Left colon (tissue), 2 donors: ENCODE measurements at regions of chr10 and their contacts with region 1.

Region 1: GRCh38 chr10:59625721-59626522 is 83.7 kb downstream of the SLC16A9 start:
- DNase-seq: no peak
- ATAC-seq: peak; percentile 76

Region 2: GRCh38 chr10:58952747-58953466 is 673.0 kb before region 1 on chr10:
- intact Hi-C with region 1: loop called in 1 of 2 experiments (anchors 5 kb)
- DNase-seq: peak in 1 of 2 donors; percentile 46
- ATAC-seq: peak; percentile 69

Region 3: DNA sequence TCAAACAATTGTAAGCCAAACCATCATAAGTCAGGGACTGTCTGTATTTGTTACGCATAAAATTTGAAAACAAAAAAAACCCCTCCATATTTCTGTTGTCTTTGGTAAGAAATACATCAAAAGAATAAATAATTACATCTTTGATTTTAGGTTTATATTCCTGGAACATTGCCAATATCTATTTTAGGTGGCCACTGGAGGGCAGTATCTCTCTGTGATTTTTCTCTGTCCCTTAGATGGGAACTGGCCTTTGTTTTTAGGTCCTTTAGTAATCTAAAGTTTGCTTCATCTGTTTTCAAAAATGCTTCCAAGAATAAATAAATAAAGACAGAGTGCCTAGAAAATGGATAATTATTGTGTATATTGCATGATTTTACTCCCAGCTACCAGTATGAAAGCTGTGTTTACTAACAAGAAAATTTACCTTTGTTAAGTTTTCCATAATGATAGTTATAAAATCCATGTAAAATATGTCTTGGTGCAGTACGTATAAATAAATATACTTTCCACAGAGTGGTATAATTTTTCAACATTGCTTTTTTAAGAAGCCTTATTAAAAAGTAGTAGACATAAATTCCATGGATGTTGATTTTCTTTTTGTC is 385.2 kb before region 1 on chr10:
- intact Hi-C with region 1: loop called in 1 of 2 experiments (anchors 5 kb)
- DNase-seq: no peak
- ATAC-seq: peak; percentile 35

Region 4: GRCh38 chr10:59557052-59557451 is 68.9 kb before region 1 on chr10:
- intact Hi-C with region 1: no loop called
- DNase-seq: no peak
- ATAC-seq: no peak

Region 5: GRCh38 chr10:59808896-59809643 is 183.1 kb after region 1 on chr10:
- intact Hi-C with region 1: loop called in 1 of 2 experiments (anchors 5 kb)
- DNase-seq: peak; percentile 76 to 91
- ATAC-seq: peak; percentile 90

Region 6: DNA sequence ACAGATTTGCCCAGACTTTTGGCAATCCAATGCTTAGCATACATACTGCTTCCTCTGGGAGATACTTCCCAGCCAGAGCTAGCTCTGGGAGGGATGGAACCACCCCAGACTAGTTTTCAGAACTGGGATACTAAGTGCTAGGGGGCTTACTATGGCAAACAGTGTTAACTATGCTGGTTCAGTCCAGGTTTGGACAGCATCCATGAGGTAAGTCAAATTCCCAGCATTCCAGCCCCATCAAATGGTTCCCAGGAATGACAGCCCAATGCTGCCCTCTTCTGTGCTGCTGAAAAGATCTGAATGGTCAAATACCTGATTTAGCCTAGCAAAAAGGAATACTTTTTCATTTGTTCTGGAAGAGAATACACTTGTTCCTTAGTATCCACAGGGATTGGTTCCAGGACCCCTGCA is 422.2 kb after region 1 on chr10:
- intact Hi-C with region 1: loop called in 1 of 2 experiments (anchors 10 kb)
- DNase-seq: no peak
- ATAC-seq: peak; percentile 51